Ascending aorta (tissue), 2 donors: ENCODE measurements at regions of chr1 and their contacts with region 1.

Region 1: GRCh38 chr1:218345673-218346390 is 696 bp downstream of the TGFB2 start:
- DNase-seq: peak in 1 of 2 donors; percentile 83
- H3K4me3 ChIP-seq: peak overlapping the region; percentile 88 to 89
- H3K27ac ChIP-seq: peak overlapping the region; percentile 81 to 89
- H3K4me1 ChIP-seq: no peaks in the 10 kb centered on the region
- H3K27me3 ChIP-seq: no peaks in the 10 kb centered on the region
- CTCF ChIP-seq: no peak

Region 2: DNA sequence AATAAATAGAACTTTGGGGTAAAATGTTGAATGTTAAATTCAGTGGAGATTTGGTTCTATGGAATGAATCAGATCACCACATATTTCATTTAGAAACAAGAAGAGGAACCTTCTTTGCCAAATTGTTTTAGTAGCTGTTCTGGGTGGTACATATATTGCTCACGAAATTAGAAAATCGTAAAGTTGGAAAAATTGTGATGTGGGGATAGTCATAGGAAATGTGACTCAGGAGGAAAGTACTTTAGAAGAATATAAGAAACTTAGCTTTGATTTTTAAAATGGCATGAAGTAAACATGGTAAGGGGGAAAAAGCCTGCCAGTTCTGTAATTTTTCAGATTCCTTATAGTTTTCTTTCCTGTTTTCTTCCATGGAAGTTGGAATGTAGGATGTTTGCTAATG is 33.3 kb before region 1 on chr1:
- intact Hi-C with region 1: no loop called
- DNase-seq: no peak
- H3K4me3 ChIP-seq: no peak overlapping the region
- H3K27ac ChIP-seq: no peak overlapping the region
- H3K4me1 ChIP-seq: no peaks in the 10 kb centered on the region
- H3K27me3 ChIP-seq: no peaks in the 10 kb centered on the region
- CTCF ChIP-seq: no peak

Region 3: GRCh38 chr1:218332416-218332815 is 13.4 kb before region 1 on chr1:
- intact Hi-C with region 1: no loop called
- DNase-seq: no peak
- H3K4me3 ChIP-seq: no peak overlapping the region
- H3K27ac ChIP-seq: no peak overlapping the region
- H3K4me1 ChIP-seq: no peaks in the 10 kb centered on the region
- H3K27me3 ChIP-seq: no peaks in the 10 kb centered on the region
- CTCF ChIP-seq: no peak

Region 4: GRCh38 chr1:218459878-218460711 is 114.3 kb after region 1 on chr1:
- intact Hi-C with region 1: loop called (anchors 2 kb)
- DNase-seq: peak in 1 of 2 donors; percentile 72
- H3K4me3 ChIP-seq: peak overlapping the region in 1 of 2 donors; percentile 51
- H3K27ac ChIP-seq: peak overlapping the region; percentile 77 to 83
- H3K4me1 ChIP-seq: peaks cover 11 to 41% of the 10 kb centered on the region in 2 donors
- H3K27me3 ChIP-seq: no peaks in the 10 kb centered on the region
- CTCF ChIP-seq: no peak

Region 5: GRCh38 chr1:218665221-218665620 is 319.4 kb after region 1 on chr1:
- intact Hi-C with region 1: loop called (anchors 10 kb)
- DNase-seq: peak; percentile 29 to 83
- H3K4me3 ChIP-seq: no peak overlapping the region
- H3K27ac ChIP-seq: no peak overlapping the region
- H3K4me1 ChIP-seq: peaks cover 0 to 4% of the 10 kb centered on the region in 2 donors
- H3K27me3 ChIP-seq: no peaks in the 10 kb centered on the region
- CTCF ChIP-seq: no peak

Region 6: DNA sequence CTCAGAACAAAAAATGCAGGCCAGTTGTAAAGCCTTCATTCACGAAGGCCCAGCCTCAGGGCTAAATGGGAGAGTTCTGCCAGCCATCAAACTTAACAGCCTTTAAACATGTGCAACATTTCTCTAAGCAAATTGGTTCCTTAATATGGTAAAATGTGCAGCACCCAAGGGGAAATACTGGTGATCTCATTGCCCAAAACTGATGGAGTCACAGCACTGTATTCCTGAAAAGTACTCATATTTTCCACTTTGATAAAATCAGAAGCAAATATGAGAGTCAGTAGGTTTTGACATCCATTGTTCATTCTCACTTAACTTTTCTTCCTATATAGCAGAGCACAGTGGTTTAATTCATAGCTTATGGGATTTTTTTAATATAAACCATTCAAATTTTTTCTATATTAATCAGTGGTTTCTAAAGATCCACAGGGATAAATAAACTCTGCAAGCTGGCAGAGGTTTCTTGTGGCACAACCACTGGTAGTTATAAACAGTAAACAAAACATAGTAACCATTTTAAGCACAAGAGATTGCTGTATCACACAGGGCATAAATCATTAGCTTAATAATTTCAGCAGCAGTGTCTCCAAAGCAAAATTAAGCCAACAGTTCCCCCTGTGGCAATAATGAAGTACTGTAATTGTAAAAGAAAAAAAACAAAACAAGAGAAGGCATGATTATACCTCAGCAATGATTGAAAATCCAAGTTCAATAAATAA is 721.0 kb after region 1 on chr1:
- intact Hi-C with region 1: loop called (anchors 10 kb)
- DNase-seq: no peak
- H3K4me3 ChIP-seq: no peak overlapping the region
- H3K27ac ChIP-seq: peak overlapping the region; percentile 73 to 76
- H3K4me1 ChIP-seq: peaks cover 0 to 7% of the 10 kb centered on the region in 2 donors
- H3K27me3 ChIP-seq: no peaks in the 10 kb centered on the region
- CTCF ChIP-seq: peak; percentile 10 to 24 (median 21)

Region 7: GRCh38 chr1:219298571-219299148 is 952.8 kb after region 1 on chr1:
- intact Hi-C with region 1: loop called (anchors 5 kb)
- DNase-seq: no peak
- H3K4me3 ChIP-seq: no peak overlapping the region
- H3K27ac ChIP-seq: peak overlapping the region; percentile 76 to 77
- H3K4me1 ChIP-seq: peaks cover 4 to 31% of the 10 kb centered on the region in 2 donors
- H3K27me3 ChIP-seq: no peaks in the 10 kb centered on the region
- CTCF ChIP-seq: no peak